ENCODE measurements at regions of chr3 and their contacts with region 1.

Region 1: GRCh38 chr3:129650256-129650872 is 43.9 kb upstream of the PLXND1 start:
- DNase-seq: peak; percentile 67 to 78 (median 69)
- ATAC-seq: peak; percentile 65 to 76
- H3K4me3 ChIP-seq: no peak overlapping the region
- H3K27ac ChIP-seq: no peak overlapping the region
- H3K4me1 ChIP-seq: no peaks in the 10 kb centered on the region
- H3K27me3 ChIP-seq: no peaks in the 10 kb centered on the region

Region 2: DNA sequence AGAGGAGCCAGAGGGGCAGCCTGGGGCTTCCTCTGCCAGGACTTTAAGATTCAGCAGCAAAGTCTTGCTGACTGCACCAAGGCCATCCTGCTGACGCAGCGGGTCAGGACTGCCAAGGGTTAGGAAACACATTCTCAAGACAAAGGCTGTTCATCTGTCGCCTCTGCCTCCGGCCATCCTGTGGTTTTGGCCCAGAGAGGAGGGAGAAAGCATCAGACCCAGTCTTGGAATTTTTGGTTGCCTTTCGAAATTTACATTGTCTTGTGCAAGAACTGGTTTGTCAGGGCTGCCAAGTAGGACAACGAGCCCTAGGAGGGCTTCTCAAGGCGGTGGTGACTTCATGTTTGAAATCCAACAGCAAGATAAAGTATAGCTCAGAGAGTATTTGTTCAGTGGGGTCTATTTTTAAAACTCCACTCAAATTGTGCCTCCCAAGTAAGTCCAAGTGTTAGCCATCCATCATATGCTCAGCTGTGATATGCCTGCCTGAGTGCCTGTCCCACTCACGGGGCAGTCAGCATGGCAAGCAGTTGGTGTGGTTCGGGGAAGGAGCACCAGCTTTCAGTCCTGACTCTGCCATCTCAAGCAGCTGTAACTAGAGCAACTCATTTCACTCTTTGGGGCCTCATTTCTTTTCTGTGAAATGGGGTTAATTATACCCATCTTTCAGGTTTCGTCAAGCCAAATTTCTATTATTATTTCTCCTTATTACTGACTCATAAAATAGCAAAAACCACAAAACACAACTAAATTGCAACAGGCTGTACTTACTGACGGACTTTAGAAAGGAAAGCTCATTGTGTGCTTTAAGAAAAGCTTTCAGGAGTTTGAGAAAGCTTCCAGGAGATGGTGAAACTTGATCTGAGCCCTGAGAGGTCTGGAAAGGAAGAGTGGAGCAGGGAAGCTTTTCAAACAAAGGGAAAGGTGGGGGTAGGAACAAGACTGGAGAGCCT is 164.4 kb before region 1 on chr3:
- intact Hi-C with region 1: no loop called
- DNase-seq: peak; percentile 92 to 93 (median 93)
- ATAC-seq: peak; percentile 67 to 75
- H3K4me3 ChIP-seq: no peak overlapping the region
- H3K27ac ChIP-seq: peak overlapping the region; percentile 68
- H3K4me1 ChIP-seq: peaks cover 9% of the 10 kb centered on the region
- H3K27me3 ChIP-seq: no peaks in the 10 kb centered on the region

Region 3: DNA sequence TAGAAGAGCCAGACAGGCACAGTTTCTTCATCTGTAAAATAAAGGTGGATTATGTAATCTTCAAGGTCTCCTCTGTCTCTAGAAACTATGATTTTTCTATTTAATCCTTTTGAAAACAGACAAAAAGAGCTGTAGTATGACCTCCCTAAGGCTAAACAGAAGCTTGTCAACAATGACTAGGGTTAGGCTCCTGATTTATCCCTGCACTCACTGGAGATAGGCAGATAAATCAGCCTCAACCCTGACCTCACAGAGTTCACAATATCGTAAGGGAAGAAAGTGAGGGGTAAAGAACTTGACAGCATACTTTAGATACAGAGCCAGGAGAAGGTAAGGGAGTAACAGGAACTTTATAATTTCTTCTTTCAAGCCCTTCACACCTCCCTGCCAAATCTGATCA is 118.4 kb after region 1 on chr3:
- intact Hi-C with region 1: loop called in 1 of 4 experiments (anchors 10 kb)
- DNase-seq: no peak
- ATAC-seq: no peak
- H3K4me3 ChIP-seq: no peak overlapping the region
- H3K27ac ChIP-seq: no peak overlapping the region
- H3K4me1 ChIP-seq: no peaks in the 10 kb centered on the region
- H3K27me3 ChIP-seq: no peaks in the 10 kb centered on the region